A549 (cell line): ENCODE measurements at regions of chr9 and their contacts with region 1.

Region 1: DNA sequence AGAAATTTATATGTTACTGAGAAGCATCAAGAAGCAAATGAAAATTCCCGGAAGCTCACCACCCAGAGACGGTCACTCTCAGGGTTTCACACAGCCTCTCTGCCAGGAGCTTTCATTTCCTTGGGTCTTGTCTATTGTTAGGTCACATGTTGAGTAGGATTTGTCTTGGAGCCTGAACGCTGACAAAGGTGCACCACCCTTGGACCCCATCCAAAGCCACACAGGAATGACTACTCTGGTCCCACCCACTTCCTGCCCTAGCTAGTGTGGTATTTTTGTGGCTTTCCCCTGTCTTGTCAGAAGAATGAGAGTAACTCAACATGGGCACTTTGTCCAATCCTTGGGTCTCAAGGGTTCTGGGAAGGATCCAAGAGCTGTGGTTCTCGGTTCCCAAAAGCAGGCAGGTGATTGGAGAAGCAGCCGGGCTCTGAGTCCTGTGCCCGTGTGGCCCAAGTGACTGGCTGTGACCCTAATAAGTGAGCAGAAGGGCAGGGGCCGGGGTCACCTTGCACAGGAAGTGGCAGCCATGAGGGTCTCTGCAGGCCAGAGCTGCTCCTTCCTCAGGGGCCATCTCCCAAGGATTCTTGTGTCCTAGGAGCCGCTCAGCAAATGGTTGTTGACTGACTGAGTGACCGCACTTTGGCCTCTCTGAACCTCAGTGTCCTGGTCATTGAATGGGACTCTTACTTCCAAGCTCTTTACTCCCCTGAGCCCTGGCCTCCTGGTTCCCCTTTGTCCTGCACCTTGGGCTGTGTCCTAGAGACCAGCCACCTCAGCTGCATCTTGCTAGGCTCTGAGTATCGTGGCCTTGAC is 6.9 kb downstream of the FGD3 start:
- DNase-seq: no peak
- ATAC-seq: no peak
- H3K4me3 ChIP-seq: no peak overlapping the region
- H3K27ac ChIP-seq: no peak overlapping the region
- H3K4me1 ChIP-seq: peaks cover 4% of the 10 kb centered on the region; the same call in 1 of the 3 replicates
- CTCF ChIP-seq: no peak
- EP300 ChIP-seq: no peak
- POLR2A ChIP-seq: no peak
- RAD21 ChIP-seq: no peak

Region 2: DNA sequence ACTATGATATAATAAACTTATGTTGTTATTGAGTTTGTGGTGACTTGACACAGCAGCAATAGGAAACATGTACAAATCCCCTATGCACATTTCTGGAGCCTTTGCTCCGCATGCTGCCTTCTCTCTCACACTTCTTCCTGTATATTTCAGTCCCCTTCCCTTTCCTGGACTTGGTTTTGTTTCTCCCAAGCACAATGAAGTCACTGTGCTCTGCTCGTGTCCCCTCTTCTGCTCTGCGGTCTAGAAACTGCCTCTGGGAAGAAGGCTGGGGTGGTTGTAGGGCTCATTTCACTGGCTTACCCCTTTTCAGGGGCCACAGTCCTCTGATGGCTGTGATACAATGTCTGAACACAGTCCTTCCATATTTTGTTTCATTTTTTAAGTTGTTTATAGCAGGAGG is 22.6 kb before region 1 on chr9:
- CTCF ChIA-PET with region 1: no interaction called
- POLR2A ChIA-PET with region 1: no interaction called
- DNase-seq: no peak
- ATAC-seq: no peak
- H3K4me3 ChIP-seq: no peak overlapping the region
- H3K27ac ChIP-seq: no peak overlapping the region
- H3K4me1 ChIP-seq: peaks cover 13% of the 10 kb centered on the region; the same call in 2 of the 3 replicates
- CTCF ChIP-seq: no peak
- EP300 ChIP-seq: no peak
- POLR2A ChIP-seq: no peak
- RAD21 ChIP-seq: no peak

Region 3: GRCh38 chr9:92964998-92965758 is 10.9 kb after region 1 on chr9:
- CTCF ChIA-PET with region 1: interaction called, 11 read pairs
- POLR2A ChIA-PET with region 1: no interaction called
- DNase-seq: no peak
- ATAC-seq: no peak
- H3K4me3 ChIP-seq: no peak overlapping the region
- H3K27ac ChIP-seq: no peak overlapping the region
- H3K4me1 ChIP-seq: no peaks in the 10 kb centered on the region
- CTCF ChIP-seq: no peak
- EP300 ChIP-seq: no peak
- POLR2A ChIP-seq: no peak
- RAD21 ChIP-seq: no peak

Region 4: GRCh38 chr9:92974761-92975479 is 20.7 kb after region 1 on chr9:
- CTCF ChIA-PET with region 1: interaction called, 10 read pairs
- POLR2A ChIA-PET with region 1: no interaction called
- DNase-seq: no peak
- ATAC-seq: peak; percentile 20 to 23; a peak in 2 of 6 replicates
- H3K4me3 ChIP-seq: no peak overlapping the region
- H3K27ac ChIP-seq: no peak overlapping the region
- H3K4me1 ChIP-seq: no peaks in the 10 kb centered on the region
- CTCF ChIP-seq: no peak
- EP300 ChIP-seq: no peak
- POLR2A ChIP-seq: no peak
- RAD21 ChIP-seq: no peak